Colonic mucosa (tissue), 4 donors: ENCODE measurements at regions of chr2 and their contacts with region 1.

Region 1: GRCh38 chr2:207734264-207734635 is 22.8 kb downstream of the CCNYL1 start:
- DNase-seq: no peak
- H3K4me3 ChIP-seq: no peak overlapping the region
- H3K27ac ChIP-seq: peak overlapping the region; percentile 24
- H3K4me1 ChIP-seq: no peaks in the 10 kb centered on the region
- H3K27me3 ChIP-seq: no peaks in the 10 kb centered on the region
- CTCF ChIP-seq: peak; percentile 40

Region 2: GRCh38 chr2:207529330-207530159 is 204.7 kb before region 1 on chr2 and contains the start of gene CREB1:
- intact Hi-C with region 1: loop called (anchors 10 kb)
- DNase-seq: peak; percentile 99
- H3K4me3 ChIP-seq: peak within 1 kb of the TSS; percentile 76
- H3K27ac ChIP-seq: peak within 1 kb of the TSS; percentile 100
- H3K4me1 ChIP-seq: peaks cover 15% of the 10 kb centered on the region
- H3K27me3 ChIP-seq: no peaks in the 10 kb centered on the region
- CTCF ChIP-seq: no peak
- total RNA-seq, gene CREB1: 46.0 to 55.4 TPM

Region 3: DNA sequence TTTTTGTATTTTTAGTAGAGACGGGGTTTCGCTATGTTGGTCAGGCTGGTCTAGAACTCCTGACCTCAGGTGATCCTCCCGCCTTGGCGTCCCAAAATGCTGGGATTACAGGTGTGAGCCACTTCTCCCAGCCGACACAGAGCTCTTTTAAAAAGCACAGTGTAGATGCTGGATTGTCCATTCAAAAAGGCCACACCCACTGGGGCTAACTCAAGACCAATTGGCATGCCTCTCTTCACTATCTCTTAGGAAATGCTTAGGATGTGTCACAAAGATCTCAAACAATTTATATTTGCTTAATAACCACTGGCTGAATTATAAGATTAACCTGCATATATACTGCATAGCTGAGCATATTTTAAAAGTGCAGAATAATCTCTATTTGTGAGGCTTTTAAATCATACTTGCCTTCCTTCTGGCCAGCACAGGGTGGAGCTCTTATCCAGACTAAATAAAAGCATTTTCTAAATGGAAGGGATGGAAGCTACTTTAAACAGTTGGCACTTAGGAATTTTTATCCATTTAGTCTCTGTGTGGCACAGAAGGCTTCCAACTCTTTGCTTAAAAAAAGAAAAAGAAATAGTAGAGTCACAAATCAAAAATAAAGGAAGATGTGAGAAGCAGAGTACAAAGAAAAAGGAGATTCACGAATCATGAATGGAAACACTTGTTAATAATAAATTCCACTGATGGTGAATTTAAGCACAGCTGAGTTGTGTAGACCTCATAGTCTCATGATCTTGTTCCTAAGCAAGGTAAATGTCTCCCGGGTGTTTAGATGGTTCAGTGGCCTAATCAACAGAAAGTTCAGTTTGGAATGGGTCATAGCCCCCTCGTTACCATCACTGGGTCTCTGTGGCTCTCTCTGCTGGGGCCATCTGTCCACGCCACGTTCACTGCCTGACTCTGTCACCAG is 367.7 kb after region 1 on chr2:
- intact Hi-C with region 1: no loop called
- DNase-seq: no peak
- H3K4me3 ChIP-seq: no peak overlapping the region
- H3K27ac ChIP-seq: no peak overlapping the region
- H3K4me1 ChIP-seq: no peaks in the 10 kb centered on the region
- H3K27me3 ChIP-seq: no peaks in the 10 kb centered on the region
- CTCF ChIP-seq: no peak